ENCODE measurements at regions of chr5 and their contacts with region 1.

Region 1: DNA sequence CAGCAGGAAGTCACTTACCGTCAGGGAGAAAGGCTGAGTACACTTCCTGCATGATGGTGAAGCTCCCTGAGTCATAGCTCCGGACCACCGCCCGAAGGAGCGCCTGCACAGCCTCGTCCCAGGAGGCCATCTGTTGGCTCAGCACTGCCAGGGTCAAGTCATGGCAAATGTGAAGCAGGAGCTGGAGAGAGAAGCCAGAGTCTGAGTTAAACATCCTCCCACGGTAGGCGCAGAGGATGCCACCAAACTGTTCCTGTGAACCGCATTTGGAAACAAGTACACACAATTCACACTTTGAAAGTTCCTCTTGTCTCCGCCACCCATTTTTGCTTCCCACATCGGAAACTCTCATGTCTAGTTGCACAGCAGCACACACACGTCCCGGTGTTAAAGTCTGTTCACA is 33.9 kb downstream of the CNOT8 start:
- DNase-seq: peak in 1 of 2 donors; percentile 16
- ATAC-seq: peak in 4 of 8 donors; percentile 44 to 85 (median 52)
- H3K4me3 ChIP-seq: no peak overlapping the region
- H3K27ac ChIP-seq: no peak overlapping the region
- H3K4me1 ChIP-seq: no peaks in the 10 kb centered on the region
- H3K27me3 ChIP-seq: no peaks in the 10 kb centered on the region
- CTCF ChIP-seq: no peak

Region 2: DNA sequence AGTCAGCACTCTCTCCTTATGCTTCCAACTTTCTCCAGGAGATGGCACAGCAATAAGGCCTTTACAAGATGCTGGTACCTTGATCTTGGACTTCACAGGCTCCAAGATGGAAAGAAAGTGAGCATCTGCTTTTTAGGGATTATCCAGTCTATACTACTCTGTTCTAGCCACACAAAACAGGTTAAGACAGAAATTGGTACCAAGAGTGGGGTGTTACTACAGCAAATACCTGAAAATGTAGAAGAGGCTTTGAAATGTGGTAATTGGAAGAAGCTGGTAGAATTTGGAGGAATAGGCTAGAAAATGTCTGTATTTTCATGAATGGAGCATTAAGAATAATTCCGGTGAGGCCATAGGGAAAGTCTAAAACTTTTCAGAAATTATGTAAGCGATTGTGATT is 1886.7 kb before region 1 on chr5:
- intact Hi-C with region 1: loop called in 1 of 10 experiments (anchors 5 kb)
- DNase-seq: no peak
- ATAC-seq: no peak
- H3K4me3 ChIP-seq: no peak overlapping the region
- H3K27ac ChIP-seq: no peak overlapping the region
- H3K4me1 ChIP-seq: no peaks in the 10 kb centered on the region
- H3K27me3 ChIP-seq: no peaks in the 10 kb centered on the region
- CTCF ChIP-seq: no peak

Region 3: GRCh38 chr5:154878642-154879335 is 13.6 kb before region 1 on chr5:
- intact Hi-C with region 1: no loop called
- DNase-seq: no peak
- ATAC-seq: no peak
- H3K4me3 ChIP-seq: no peak overlapping the region
- H3K27ac ChIP-seq: peak overlapping the region in 1 of 10 donors; percentile 75
- H3K4me1 ChIP-seq: peaks cover 0 to 20% (median 5%) of the 10 kb centered on the region in 9 donors
- H3K27me3 ChIP-seq: no peaks in the 10 kb centered on the region
- CTCF ChIP-seq: no peak